GM10248 (cell line): ENCODE measurements at regions of chr3 and their contacts with region 1.

Region 1: DNA sequence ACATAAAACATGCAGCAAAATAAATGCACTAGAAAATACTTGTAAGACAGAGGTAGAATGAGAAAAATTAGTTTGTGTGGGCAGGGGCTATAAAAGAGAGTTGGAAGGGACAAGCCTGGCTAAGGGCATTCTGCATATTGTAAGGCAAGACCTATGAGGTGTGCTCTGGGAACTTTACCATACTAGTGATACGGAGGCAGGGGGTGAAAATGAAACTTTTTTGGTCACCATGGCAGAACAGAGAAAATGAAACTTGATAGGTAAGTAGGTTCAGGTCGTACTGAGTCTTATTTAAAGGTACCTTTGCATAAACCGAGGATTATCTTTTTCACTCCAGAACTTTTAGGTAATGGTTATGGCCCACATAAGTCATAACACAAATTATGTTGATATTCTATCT is 74.7 kb upstream of the ACKR4 start:
- DNase-seq: peak; percentile 31
- CTCF ChIP-seq: no peak

Region 2: DNA sequence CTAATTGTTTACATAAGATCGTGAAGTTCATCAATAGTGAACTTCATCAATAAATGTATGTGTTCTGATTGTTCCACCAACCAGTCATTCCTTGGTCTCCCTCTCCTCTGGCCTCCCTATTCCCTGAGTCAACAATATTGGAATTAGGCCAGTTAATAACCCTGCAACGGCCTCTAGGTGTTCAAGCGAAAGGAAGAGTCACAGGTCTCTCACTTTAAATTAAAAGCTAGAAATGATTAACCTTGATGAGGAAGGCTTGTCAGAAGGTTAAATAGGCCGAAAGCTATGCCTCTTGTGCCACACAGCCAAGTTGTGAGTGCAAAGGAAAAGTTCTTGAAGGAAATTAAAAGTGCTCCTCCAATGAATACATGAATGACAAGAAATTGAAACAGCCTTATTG is 14.7 kb before region 1 on chr3:
- CTCF ChIA-PET with region 1: interaction called, 15 read pairs
- POLR2A ChIA-PET with region 1: no interaction called
- DNase-seq: no peak
- CTCF ChIP-seq: no peak